ENCODE measurements at regions of chr17 and their contacts with region 1.

Region 1: DNA sequence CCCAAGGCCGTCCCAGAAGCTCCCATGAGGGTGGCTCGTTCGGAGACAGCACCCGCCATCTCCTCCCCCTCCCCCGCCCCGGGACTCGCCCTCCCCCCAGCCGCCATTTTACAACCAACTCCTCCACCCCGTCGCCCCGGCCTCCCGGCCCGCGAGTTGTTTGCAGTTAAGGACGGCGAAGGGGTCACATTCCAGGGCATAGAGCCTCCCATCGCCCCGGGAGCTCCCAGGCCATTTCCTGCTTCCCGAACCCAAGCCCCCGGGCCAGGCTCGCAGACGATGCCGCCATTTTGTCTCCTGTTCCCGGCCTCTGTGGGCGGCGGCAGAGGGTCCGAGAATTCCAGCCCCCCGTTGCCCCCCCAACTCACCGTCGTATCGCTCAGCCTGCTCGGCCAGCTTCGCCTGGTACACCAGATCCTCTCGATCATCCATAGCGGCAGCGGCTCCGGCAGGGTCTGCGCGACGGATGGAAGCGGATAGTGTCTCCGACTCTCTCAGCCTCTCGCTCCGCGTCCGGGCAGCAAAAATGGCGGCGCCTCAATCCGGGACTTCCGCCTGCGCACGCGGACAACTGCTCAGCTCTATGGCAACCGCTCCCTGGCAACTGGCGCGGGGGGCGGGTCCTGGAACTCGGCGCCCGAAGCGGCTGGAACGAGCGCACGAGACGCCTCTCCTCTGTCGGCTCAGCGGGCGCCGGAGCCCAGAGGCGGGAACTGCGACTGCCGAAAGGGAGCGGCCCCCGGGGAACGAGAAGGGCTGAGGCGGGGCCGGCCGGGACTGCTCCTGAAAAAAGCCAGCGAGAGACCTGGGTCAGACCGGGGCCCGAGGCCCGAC is at the start of gene YWHAE:
- DNase-seq: peak; percentile 91 to 98 (median 94)
- ATAC-seq: peak; percentile 86 to 91 (median 90)
- H3K4me3 ChIP-seq: peak within 1 kb of the TSS; percentile 92 to 95
- H3K4me3 Mint-ChIP-seq: peak within 1 kb of the TSS; percentile 97 to 99 (median 98)
- H3K27ac ChIP-seq: peak within 1 kb of the TSS; percentile 84
- H3K27ac Mint-ChIP-seq: peak within 1 kb of the TSS; percentile 97 to 98
- H3K4me1 ChIP-seq: peaks cover 18 to 37% of the 10 kb centered on the region in 2 experiments
- H3K4me1 Mint-ChIP-seq: peaks cover 34 to 43% (median 40%) of the 10 kb centered on the region in 3 donors
- H3K27me3 ChIP-seq: no peaks in the 10 kb centered on the region
- H3K27me3 Mint-ChIP-seq: no peaks in the 10 kb centered on the region
- total RNA-seq, gene YWHAE: 119 to 129 (median 126) TPM

Region 2: GRCh38 chr17:1374431-1375177 is 25.3 kb before region 1 on chr17:
- CTCF ChIA-PET with region 1: interaction called, 3 to 5 read pairs
- POLR2A ChIA-PET with region 1: interaction called, 10 to 13 read pairs
- DNase-seq: peak in 1 of 35 experiments; percentile 48
- ATAC-seq: peak; percentile 59 to 68 (median 61)
- H3K4me3 ChIP-seq: peak overlapping the region in 1 of 2 donors; percentile 28
- H3K4me3 Mint-ChIP-seq: peak overlapping the region; percentile 28 to 65 (median 37)
- H3K27ac ChIP-seq: peak overlapping the region; percentile 35
- H3K27ac Mint-ChIP-seq: peak overlapping the region; percentile 73 to 87
- H3K4me1 ChIP-seq: peaks cover 35 to 82% of the 10 kb centered on the region in 2 experiments
- H3K4me1 Mint-ChIP-seq: peaks cover 69 to 84% (median 81%) of the 10 kb centered on the region in 3 donors
- H3K27me3 ChIP-seq: no peaks in the 10 kb centered on the region
- H3K27me3 Mint-ChIP-seq: no peaks in the 10 kb centered on the region

Region 3: DNA sequence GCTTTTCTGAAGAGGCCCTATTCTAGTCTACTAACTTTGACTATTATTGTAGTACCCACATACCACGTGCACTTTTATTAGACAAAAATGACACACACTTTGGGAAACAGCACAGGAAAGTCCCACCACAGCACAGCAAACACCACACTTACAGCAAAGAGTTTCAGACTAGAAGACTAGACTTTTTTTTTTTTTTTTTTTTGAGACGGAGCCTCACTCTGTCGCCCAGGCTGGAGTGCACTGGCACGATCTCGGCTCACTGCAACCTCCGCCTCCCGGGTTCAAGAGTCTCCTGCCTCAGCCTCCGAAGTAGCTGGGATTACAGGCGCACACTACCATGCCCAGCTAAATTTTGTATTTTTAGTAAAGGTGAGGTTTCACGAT is 20.0 kb before region 1 on chr17:
- CTCF ChIA-PET with region 1: interaction called, 3 to 5 read pairs
- POLR2A ChIA-PET with region 1: interaction called, 3 to 13 read pairs
- DNase-seq: peak in 5 of 35 experiments; percentile 13 to 64 (median 16)
- ATAC-seq: peak in 1 of 4 experiments; percentile 54
- H3K4me3 ChIP-seq: no peak overlapping the region
- H3K4me3 Mint-ChIP-seq: peak overlapping the region; percentile 18 to 54 (median 39)
- H3K27ac ChIP-seq: no peak overlapping the region
- H3K27ac Mint-ChIP-seq: peak overlapping the region; percentile 5 to 65
- H3K4me1 ChIP-seq: peaks cover 40 to 90% of the 10 kb centered on the region in 2 experiments
- H3K4me1 Mint-ChIP-seq: peaks cover 78 to 87% (median 80%) of the 10 kb centered on the region in 3 donors
- H3K27me3 ChIP-seq: no peaks in the 10 kb centered on the region
- H3K27me3 Mint-ChIP-seq: no peaks in the 10 kb centered on the region

Region 4: DNA sequence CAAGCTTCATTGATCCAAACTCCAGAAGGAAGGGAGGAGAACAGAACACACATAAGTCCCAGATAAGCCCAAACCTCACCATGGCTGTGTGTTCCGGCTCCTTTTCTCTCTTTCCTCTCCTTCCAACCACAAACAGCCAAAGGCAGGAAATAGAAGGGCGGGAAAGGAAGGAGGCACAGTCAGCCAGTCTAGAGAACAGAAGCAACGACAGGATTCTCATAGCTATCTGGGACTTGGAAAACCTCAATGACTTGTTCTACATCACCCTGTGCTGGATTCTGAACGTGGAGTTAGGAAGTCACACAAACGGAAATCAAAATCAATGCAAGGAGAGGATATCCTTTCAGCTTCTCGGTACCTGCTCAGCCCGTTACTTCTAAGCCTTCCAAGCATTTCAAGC is 47.2 kb after region 1 on chr17:
- CTCF ChIA-PET with region 1: interaction called in 1 of 2 experiments, 3 read pairs
- POLR2A ChIA-PET with region 1: interaction called, 3 to 14 read pairs
- DNase-seq: no peak
- ATAC-seq: peak in 1 of 4 experiments; percentile 22
- H3K4me3 ChIP-seq: no peak overlapping the region
- H3K4me3 Mint-ChIP-seq: peak overlapping the region in 1 of 3 donors; percentile 42
- H3K27ac ChIP-seq: no peak overlapping the region
- H3K27ac Mint-ChIP-seq: peak overlapping the region in 1 of 2 donors; percentile 39
- H3K4me1 ChIP-seq: peaks cover 7 to 43% of the 10 kb centered on the region in 2 experiments
- H3K4me1 Mint-ChIP-seq: peaks cover 29 to 53% (median 53%) of the 10 kb centered on the region in 3 donors
- H3K27me3 ChIP-seq: no peaks in the 10 kb centered on the region
- H3K27me3 Mint-ChIP-seq: no peaks in the 10 kb centered on the region

Measured in T-cell (primary cell).